ENCODE measurements at regions of chr1 and their contacts with region 1.

Region 1: GRCh38 chr1:226062558-226063223 is at the start of gene H3-3A:
- DNase-seq: peak; percentile 98
- ATAC-seq: peak; percentile 74
- H3K4me3 Mint-ChIP-seq: peak within 1 kb of the TSS; percentile 100
- H3K27ac Mint-ChIP-seq: peak within 1 kb of the TSS; percentile 99
- H3K4me1 Mint-ChIP-seq: peaks cover 43% of the 10 kb centered on the region
- H3K27me3 Mint-ChIP-seq: no peaks in the 10 kb centered on the region; the same call in 1 of the 2 replicates
- CTCF ChIP-seq: no peak
- total RNA-seq, gene H3-3A: 894 to 987 TPM (median 963 TPM) in 3 replicates

Region 2: GRCh38 chr1:225987491-225988316 is 75.0 kb before region 1 on chr1:
- CTCF ChIA-PET with region 1: interaction called, 18 read pairs
- POLR2A ChIA-PET with region 1: no interaction called
- DNase-seq: no peak
- ATAC-seq: no peak
- H3K4me3 Mint-ChIP-seq: no peak overlapping the region
- H3K27ac Mint-ChIP-seq: peak overlapping the region; percentile 43; the same call in 1 of the 2 replicates
- H3K4me1 Mint-ChIP-seq: no peaks in the 10 kb centered on the region
- H3K27me3 Mint-ChIP-seq: no peaks in the 10 kb centered on the region
- CTCF ChIP-seq: peak; percentile 64

Region 3: DNA sequence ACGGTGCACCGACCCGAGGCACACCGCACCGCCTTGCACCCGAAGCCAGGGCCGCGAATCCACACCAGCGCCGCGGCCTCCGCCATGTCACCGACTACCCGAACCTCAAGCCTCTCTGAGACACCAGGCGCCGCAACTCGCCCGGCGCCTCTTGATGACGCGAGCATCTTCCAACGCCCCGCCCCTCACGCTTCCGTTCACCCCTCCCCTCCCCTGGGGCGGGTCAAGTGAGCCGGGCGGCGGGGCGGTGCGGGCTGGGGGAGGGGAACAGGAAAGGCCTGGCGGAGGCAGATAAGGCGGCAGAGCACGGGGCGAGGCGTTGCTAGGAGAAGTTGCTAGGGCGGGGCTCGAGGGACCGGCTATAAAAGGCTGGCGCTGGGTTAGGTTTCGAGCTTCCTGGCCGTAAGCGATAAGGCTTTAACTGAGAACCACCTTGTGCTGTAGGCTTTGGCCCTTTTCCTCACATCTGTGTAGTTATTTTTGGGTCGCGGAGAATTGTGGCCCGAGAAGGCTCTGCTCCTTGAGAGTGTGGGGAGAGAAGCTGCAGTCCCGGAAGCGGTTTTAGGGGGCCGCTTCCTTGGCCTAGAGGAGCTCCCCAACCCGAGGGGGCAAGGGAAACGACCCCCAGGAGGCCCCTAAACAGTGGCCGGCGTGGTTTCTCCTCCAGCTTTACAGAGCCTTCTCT is 63.3 kb before region 1 on chr1 and contains the start of gene SDE2:
- CTCF ChIA-PET with region 1: interaction called, 9 read pairs
- POLR2A ChIA-PET with region 1: interaction called, 30 read pairs
- DNase-seq: peak; percentile 100
- ATAC-seq: peak; percentile 94
- H3K4me3 Mint-ChIP-seq: peak within 1 kb of the TSS; percentile 100
- H3K27ac Mint-ChIP-seq: peak within 1 kb of the TSS; percentile 100
- H3K4me1 Mint-ChIP-seq: peaks cover 27% of the 10 kb centered on the region
- H3K27me3 Mint-ChIP-seq: no peaks in the 10 kb centered on the region
- CTCF ChIP-seq: no peak
- total RNA-seq, gene SDE2: 13.5 to 17.2 TPM (median 14.6 TPM) in 3 replicates

Region 4: DNA sequence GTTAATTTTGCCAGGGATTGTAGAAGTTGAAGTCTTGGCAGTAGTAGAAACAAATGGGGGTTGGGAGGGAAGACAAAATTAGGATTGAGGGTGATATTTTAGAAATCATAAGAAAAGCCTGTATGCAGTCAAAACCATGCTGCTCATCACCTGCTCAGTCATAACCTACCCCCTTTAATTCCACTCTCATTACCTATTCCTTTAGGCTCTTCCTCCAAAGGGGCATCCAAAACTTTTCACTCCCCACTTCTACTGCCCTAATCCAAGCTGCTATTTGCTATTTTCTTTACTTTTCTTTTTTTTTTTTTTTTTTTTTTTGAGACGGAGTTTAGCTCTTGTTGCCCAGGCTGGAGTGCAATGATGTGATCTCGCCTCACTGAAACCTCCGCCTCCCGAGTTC is 11.4 kb after region 1 on chr1:
- CTCF ChIA-PET with region 1: interaction called, 21 read pairs
- POLR2A ChIA-PET with region 1: interaction called, 3 read pairs
- DNase-seq: no peak
- ATAC-seq: no peak
- H3K4me3 Mint-ChIP-seq: no peak overlapping the region
- H3K27ac Mint-ChIP-seq: peak overlapping the region; percentile 38
- H3K4me1 Mint-ChIP-seq: peaks cover 3% of the 10 kb centered on the region
- H3K27me3 Mint-ChIP-seq: no peaks in the 10 kb centered on the region
- CTCF ChIP-seq: no peak

Region 5: DNA sequence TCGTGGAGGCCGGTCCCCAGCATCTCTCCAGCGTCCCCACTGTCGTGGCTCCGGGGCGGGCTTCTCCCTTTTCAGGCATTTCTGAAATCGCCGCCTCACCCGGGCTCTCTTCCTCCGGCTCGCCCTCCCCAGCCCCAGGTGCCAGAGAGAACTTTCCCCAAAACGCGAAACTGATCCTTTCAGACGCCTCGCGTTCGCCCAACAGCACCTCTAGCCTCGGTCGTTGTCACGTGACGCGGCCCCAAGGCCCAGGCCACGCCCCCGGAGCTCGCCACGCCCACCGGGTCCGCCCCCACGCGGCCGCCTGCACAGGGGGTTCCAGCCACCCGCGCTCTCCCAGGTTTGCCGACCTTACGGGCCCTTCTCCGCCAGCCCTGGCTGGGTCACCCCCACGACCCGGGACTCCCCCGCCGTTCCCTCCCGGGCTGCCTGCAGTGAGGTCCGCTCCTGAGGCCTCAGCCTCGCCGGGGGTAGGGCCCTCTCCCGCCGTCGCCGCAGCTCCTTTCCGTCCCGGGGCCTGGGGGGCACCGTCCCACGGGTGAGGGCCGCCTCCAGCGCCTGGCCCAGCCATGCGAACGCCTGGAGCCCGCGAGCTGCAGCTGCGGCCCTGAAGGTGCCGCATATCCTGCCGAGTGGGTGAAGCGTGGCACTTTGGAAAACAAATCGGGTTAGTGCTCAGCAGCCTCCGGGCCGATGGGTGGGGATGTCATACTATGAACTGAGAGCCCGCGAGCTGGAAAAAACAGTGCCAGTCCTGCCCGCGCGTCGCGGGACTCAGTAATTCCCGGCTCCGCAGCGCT is 20.8 kb after region 1 on chr1:
- CTCF ChIA-PET with region 1: interaction called, 24 read pairs
- POLR2A ChIA-PET with region 1: interaction called, 15 read pairs
- DNase-seq: peak; percentile 93
- ATAC-seq: peak; percentile 83
- H3K4me3 Mint-ChIP-seq: peak overlapping the region; percentile 85
- H3K27ac Mint-ChIP-seq: no peak overlapping the region
- H3K4me1 Mint-ChIP-seq: peaks cover 6% of the 10 kb centered on the region
- H3K27me3 Mint-ChIP-seq: peaks cover 59% of the 10 kb centered on the region
- CTCF ChIP-seq: no peak

Region 6: DNA sequence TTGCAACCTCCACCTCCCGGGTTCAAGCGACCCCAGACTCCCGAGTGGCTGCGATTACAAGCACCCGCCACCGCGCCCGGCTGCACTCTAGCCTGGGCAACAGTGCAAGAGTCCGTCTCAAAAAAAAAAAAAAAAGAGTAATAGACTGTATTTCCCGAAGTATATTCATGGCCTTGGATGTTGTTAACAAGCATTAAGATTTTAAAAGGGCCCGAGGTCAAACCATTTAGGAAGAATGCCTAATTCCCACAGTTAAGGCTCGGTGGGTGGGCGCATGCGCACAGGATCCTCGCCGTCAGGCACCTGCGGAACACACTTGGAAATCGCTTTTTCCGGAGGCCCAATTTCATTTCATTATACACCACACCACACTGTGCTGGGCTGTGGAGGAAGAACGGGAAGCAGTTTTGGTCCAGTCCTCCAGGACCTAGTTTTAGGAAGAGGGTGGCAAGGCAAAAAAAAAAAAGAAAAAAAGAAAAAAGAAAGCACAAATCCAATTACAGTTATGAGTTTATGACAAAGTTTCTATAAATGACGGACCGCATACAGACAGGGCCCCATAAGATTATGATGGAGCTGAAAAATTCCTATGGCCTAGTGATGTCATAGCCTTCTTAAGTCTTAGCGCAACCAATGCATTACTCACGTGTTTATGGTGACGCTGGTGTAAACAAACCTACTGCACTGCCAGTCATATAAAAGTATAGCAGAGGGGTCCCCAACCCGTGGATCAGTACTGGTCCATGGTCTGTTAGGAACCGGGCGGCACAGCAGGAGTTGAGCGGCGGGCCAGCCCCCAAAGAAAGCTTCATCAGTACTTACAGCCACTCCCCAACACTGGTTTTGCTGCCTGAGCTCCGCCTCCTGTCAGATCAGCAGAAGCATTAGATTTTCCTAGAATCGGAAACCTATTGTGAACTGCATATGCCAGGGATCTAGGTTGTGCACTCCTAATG is 38.0 kb after region 1 on chr1:
- CTCF ChIA-PET with region 1: interaction called, 13 read pairs
- POLR2A ChIA-PET with region 1: interaction called, 7 read pairs
- DNase-seq: peak; percentile 61
- ATAC-seq: peak; percentile 47
- H3K4me3 Mint-ChIP-seq: peak overlapping the region; percentile 76
- H3K27ac Mint-ChIP-seq: no peak overlapping the region
- H3K4me1 Mint-ChIP-seq: peaks cover 39% of the 10 kb centered on the region
- H3K27me3 Mint-ChIP-seq: peaks cover 17% of the 10 kb centered on the region
- CTCF ChIP-seq: no peak

Region 7: GRCh38 chr1:226109829-226110248 is 47.1 kb after region 1 on chr1:
- CTCF ChIA-PET with region 1: interaction called, 40 read pairs
- POLR2A ChIA-PET with region 1: interaction called, 20 read pairs
- DNase-seq: peak; percentile 83
- ATAC-seq: peak; percentile 77
- H3K4me3 Mint-ChIP-seq: peak overlapping the region; percentile 90
- H3K27ac Mint-ChIP-seq: peak overlapping the region; percentile 85
- H3K4me1 Mint-ChIP-seq: peaks cover 46% of the 10 kb centered on the region
- H3K27me3 Mint-ChIP-seq: peaks cover 20% of the 10 kb centered on the region
- CTCF ChIP-seq: no peak